Caco-2 (cell line): ENCODE measurements at regions of chr17 and their contacts with region 1.

Region 1: GRCh38 chr17:49414622-49415350 is at the start of gene PHB1:
- DNase-seq: peak; percentile 100
- H3K4me3 ChIP-seq: peak within 1 kb of the TSS; percentile 61
- H3K4me3 Mint-ChIP-seq: peak within 1 kb of the TSS; percentile 88
- H3K27ac Mint-ChIP-seq: peak within 1 kb of the TSS; percentile 84
- H3K4me1 ChIP-seq: peaks cover 4% of the 10 kb centered on the region
- H3K4me1 Mint-ChIP-seq: no peaks in the 10 kb centered on the region
- H3K27me3 ChIP-seq: no peaks in the 10 kb centered on the region
- H3K27me3 Mint-ChIP-seq: no peaks in the 10 kb centered on the region
- CTCF ChIP-seq: no peak
- total RNA-seq, gene PHB1: 761 and 848 TPM in 2 replicates

Region 2: GRCh38 chr17:49249292-49249794 is 165.4 kb before region 1 on chr17:
- CTCF ChIA-PET with region 1: no interaction called
- POLR2A ChIA-PET with region 1: no interaction called
- intact Hi-C with region 1: no loop called
- DNase-seq: no peak
- H3K4me3 ChIP-seq: no peak overlapping the region
- H3K4me3 Mint-ChIP-seq: no peak overlapping the region
- H3K27ac Mint-ChIP-seq: no peak overlapping the region
- H3K4me1 ChIP-seq: no peaks in the 10 kb centered on the region
- H3K4me1 Mint-ChIP-seq: no peaks in the 10 kb centered on the region
- H3K27me3 ChIP-seq: no peaks in the 10 kb centered on the region
- H3K27me3 Mint-ChIP-seq: no peaks in the 10 kb centered on the region
- CTCF ChIP-seq: no peak

Region 3: GRCh38 chr17:49486012-49486641 is 71.3 kb after region 1 on chr17:
- CTCF ChIA-PET with region 1: interaction called, 12 read pairs
- POLR2A ChIA-PET with region 1: no interaction called
- intact Hi-C with region 1: no loop called
- DNase-seq: no peak
- H3K4me3 ChIP-seq: no peak overlapping the region
- H3K4me3 Mint-ChIP-seq: no peak overlapping the region
- H3K27ac Mint-ChIP-seq: no peak overlapping the region
- H3K4me1 ChIP-seq: no peaks in the 10 kb centered on the region
- H3K4me1 Mint-ChIP-seq: no peaks in the 10 kb centered on the region
- H3K27me3 ChIP-seq: no peaks in the 10 kb centered on the region; the same call in 1 of the 2 replicates
- H3K27me3 Mint-ChIP-seq: peaks cover 43% of the 10 kb centered on the region
- CTCF ChIP-seq: no peak

Region 4: GRCh38 chr17:49515196-49515770 is 100.5 kb after region 1 on chr17:
- CTCF ChIA-PET with region 1: no interaction called
- POLR2A ChIA-PET with region 1: interaction called, 10 read pairs
- intact Hi-C with region 1: no loop called
- DNase-seq: peak; percentile 62 to 63
- H3K4me3 ChIP-seq: no peak overlapping the region
- H3K4me3 Mint-ChIP-seq: no peak overlapping the region
- H3K27ac Mint-ChIP-seq: peak overlapping the region; percentile 5
- H3K4me1 ChIP-seq: no peaks in the 10 kb centered on the region
- H3K4me1 Mint-ChIP-seq: peaks cover 20% of the 10 kb centered on the region
- H3K27me3 ChIP-seq: no peaks in the 10 kb centered on the region
- H3K27me3 Mint-ChIP-seq: peaks cover 8% of the 10 kb centered on the region
- CTCF ChIP-seq: no peak

Region 5: DNA sequence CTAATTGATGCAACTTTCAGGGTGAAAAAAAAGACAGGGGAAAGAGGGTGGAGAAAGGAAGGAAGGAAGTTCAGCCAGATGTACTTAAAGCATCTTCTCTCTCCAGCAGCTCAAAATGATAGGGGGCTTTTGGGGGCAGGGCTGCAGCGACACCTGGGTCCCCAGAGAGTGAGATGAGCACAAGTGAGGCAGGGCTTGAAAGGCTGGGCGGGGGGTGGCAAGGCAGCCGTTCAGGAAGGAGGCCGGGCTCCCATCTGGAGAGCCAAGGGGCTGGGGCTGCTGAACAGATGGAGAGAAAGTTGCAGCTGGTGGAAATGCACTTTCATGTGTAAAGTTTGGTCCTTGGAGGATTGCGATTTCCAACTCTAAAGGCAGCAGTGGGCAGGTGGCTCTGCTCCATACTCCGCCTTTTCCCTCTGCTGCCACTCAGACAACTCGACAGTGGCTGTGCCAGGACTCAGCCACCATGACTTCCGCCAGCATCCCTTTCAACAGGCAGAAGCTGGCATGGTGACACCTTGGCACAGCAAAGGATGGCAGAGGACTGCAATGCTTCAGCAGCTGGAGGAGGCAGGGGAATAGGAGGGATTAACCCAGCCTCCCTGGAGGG is 285.3 kb after region 1 on chr17:
- CTCF ChIA-PET with region 1: interaction called, 5 read pairs
- POLR2A ChIA-PET with region 1: no interaction called
- intact Hi-C with region 1: loop called (anchors 2 kb)
- DNase-seq: no peak
- H3K4me3 ChIP-seq: no peak overlapping the region
- H3K4me3 Mint-ChIP-seq: no peak overlapping the region
- H3K27ac Mint-ChIP-seq: no peak overlapping the region
- H3K4me1 ChIP-seq: no peaks in the 10 kb centered on the region; the same call in 1 of the 2 replicates
- H3K4me1 Mint-ChIP-seq: peaks cover 16% of the 10 kb centered on the region
- H3K27me3 ChIP-seq: no peaks in the 10 kb centered on the region
- H3K27me3 Mint-ChIP-seq: no peaks in the 10 kb centered on the region
- CTCF ChIP-seq: no peak